ENCODE measurements at regions of chr5 and their contacts with region 1.

Region 1: GRCh38 chr5:102778478-102778877 is 23.4 kb downstream of the PAM start:
- DNase-seq: no peak

Region 2: DNA sequence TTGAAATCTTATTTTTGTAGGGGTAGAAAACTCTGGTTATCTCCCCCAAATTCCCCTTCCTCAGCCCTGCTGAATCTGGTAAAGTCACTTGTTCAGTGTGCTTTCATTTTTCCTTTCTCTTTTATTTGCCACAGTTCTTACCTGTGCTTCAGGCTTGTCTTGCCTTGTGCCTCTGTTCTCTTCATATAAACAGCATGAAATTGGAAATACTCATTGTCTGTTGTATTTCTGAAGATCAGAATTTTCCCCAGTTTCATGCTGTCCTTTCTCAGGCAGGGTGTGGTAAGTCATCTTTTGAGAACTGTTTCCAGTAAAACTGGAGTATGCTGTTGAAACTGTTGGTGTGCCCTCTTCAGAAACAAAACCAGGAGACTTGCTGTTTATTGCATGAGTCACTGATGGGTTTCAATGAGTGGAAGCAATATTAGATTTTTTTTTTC is 16.4 kb before region 1 on chr5:
- intact Hi-C with region 1: loop called (anchors 2 kb)
- DNase-seq: no peak

Region 3: DNA sequence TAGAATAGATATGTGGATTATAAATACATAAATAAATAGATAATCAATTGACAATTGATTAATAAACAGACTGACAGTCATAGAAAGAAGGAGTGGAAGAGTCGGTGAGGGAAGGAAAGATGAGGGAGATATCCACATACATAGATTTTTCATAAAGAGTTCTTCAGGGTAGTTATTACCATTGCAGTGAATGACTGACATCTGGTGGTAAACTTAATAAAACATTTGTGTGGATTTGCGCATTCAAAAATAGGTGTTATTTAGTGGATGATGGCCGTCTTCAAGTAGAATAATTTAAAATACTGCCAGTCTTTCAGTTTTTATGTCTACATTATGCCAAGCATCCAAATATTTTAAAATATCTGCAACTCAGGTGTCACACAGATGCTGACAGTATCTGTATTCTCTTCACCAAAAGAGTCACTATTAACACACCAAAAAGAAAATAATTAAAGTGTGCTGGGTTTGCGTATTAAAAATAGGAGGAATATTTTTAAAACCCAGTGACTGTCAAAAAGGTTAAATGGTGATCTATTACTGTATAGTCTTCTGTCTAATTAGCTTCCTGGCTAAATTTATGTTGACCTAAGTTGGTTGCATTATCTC is 262.7 kb after region 1 on chr5:
- intact Hi-C with region 1: loop called (anchors 5 kb)
- DNase-seq: no peak

Region 4: DNA sequence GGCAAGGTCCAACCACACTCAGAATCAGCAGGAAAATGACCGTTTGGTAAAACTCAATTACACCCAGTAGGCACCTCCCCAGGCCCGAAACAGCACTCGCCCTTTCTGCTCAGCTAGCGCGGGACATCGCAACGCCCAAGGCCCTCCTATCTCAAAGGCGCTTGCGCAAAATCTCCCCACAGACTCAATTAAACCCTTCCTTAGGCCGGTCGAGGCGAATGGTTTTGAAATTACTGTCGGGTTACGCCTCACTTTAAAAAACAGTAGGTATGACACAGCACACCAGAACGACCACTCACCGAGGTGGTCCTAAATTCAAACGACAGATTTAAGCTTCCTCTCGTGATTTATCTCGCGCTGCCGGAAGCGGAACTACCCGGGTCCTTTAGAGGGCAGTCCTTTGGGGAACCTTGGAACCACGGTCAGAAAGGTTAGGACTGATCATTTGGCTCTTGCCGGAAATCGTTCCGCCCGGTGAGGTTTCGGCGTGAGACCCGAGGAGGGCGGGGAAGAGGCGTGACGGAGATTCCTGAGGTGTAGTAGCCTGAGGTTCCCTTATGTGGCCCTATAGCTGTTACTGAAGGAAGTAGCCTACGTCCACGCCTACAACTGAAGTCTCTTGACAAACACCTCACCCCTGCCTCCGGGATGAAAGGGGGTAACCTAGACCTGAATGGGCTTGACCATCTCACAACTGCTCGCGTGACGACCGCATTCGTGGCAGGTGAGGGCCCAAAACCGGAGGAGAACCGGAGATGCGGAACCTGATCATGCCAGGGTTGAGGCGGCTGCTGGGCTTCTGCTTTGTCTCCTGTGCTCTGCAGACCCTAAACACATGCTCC is 341.5 kb after region 1 on chr5 and contains the starts of genes GIN1 and PPIP5K2:
- intact Hi-C with region 1: loop called (anchors 5 kb)
- DNase-seq: peak; percentile 99
- total RNA-seq, gene GIN1: 14.8 TPM
- total RNA-seq, gene PPIP5K2: 31.1 TPM

Measured in cardiac septum (tissue), 1 donor.